ENCODE measurements at regions of chr4 and their contacts with region 1.

Region 1: DNA sequence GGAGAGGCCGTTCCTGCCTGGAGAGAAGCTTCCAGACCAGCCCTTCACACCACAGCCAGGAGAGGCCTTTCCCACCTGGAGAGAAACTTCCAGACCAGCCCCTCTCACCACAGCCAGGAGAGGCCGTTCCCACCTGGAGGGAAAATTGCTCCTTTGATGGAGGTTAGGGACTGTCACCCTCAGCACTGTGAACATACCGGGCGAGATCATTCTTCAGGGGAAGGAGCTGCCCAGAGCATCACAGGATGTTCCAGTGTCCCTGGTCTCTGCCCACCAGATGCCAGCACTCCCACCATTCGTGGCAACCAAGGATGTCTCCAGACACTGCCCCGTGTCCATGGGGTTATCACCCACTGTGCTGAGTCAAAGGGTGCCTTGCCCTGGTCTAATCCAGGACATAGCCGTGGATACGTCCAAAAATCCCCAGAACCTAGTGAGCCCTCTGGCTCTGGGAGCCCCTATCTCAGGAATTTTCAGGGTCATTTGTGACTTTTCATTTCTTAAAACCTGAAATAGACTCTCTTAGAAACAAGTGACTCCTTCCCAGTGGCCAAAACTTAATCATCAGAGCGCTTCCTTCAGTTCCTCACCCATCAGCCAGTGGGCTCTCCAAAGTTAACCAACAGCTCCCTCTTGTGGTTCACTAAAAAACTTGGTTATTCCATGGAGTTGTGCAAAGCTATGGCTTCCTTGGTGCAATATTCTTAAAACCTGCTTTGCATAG is 80.2 kb downstream of the CRMP1 start:
- DNase-seq: peak; percentile 18 to 48
- H3K4me3 ChIP-seq: no peak overlapping the region
- H3K27ac ChIP-seq: no peak overlapping the region
- H3K4me1 ChIP-seq: no peaks in the 10 kb centered on the region
- H3K27me3 ChIP-seq: no peaks in the 10 kb centered on the region
- CTCF ChIP-seq: peak; percentile 76

Region 2: DNA sequence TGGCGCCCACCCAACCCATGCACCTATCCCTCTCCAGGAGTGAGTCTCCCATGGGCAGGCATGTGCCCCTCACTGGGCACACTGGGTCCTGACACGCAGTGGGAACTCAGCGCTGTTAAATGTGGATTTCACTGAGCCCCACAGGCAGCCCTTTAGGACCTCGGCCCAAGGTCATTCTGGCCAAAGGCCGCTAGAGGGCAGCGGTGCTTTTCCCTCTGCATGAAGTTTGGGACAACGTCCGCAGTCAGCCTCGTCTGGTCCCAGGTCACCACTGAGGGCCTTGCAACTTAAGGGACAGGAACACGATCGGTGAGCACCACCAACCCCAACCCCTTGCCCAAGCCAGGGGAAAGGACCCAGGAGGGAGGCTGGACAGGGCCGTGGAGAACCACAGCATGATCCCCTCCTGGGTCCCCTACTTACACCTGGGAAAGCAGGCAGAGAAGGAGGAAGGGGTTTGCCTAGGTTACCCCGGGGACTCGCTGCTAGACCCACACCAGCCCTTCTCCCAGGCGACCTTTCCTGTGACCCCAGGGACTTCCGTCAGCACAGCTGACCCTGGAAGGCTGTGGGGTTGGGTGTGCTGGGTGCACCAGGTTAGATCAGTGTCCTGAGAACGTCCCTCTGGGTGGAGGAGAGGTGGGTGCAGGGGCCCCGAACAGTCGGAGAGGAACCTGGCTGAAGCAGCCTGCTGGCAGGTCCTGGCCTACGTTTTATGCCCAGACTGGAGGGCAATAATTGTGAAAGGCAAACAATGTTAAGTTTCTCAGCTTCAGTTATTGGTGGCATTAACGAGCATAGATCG is 817.4 kb before region 1 on chr4:
- CTCF ChIA-PET with region 1: interaction called, 3 read pairs
- POLR2A ChIA-PET with region 1: no interaction called
- intact Hi-C with region 1: loop called (anchors 1 kb)
- DNase-seq: peak in 1 of 2 experiments; percentile 40
- H3K4me3 ChIP-seq: no peak overlapping the region
- H3K27ac ChIP-seq: no peak overlapping the region
- H3K4me1 ChIP-seq: peaks cover 8% of the 10 kb centered on the region
- H3K27me3 ChIP-seq: peaks cover 3% of the 10 kb centered on the region; the same call in 1 of the 2 replicates
- CTCF ChIP-seq: peak; percentile 81

Region 3: DNA sequence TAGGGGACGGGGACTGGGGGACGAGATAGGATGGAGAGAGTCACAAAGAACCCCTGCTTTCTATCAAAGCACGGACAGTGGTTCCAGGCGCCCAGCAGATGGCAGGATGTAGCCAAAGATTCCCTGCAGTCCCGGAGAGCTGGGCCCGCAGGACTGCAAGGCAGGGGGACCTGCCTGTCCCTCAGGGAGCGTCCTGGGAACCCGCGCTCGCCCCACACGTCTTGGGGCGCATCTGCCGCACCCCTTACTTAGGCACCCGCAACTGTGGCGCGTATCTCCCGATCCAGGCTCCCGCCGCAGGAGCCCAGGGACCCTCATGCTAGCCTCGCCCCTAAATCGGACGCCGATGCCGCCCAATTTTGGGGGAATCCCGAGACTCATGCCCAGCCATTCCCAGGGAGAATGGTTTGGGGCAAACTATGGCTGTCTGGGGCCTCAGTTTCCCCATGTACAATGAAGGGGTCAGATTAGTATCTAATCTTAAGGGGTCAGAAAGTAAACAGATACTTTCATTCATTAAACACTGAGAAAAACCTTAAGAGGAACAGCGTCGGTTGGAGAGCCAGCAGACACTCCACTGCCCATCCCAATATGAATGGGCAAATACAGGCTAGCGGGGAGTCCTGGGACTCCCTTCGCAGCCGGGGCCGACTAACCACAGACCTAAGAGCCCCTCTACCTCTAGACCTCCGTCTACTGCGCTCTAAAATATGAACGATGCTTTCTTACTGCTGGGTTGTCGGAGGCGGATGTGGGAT is 762.0 kb before region 1 on chr4:
- CTCF ChIA-PET with region 1: no interaction called
- POLR2A ChIA-PET with region 1: no interaction called
- intact Hi-C with region 1: loop called (anchors 5 kb)
- DNase-seq: peak in 1 of 2 experiments; percentile 22
- H3K4me3 ChIP-seq: no peak overlapping the region
- H3K27ac ChIP-seq: no peak overlapping the region
- H3K4me1 ChIP-seq: no peaks in the 10 kb centered on the region
- H3K27me3 ChIP-seq: peaks cover 23% of the 10 kb centered on the region
- CTCF ChIP-seq: peak; percentile 60

Region 4: DNA sequence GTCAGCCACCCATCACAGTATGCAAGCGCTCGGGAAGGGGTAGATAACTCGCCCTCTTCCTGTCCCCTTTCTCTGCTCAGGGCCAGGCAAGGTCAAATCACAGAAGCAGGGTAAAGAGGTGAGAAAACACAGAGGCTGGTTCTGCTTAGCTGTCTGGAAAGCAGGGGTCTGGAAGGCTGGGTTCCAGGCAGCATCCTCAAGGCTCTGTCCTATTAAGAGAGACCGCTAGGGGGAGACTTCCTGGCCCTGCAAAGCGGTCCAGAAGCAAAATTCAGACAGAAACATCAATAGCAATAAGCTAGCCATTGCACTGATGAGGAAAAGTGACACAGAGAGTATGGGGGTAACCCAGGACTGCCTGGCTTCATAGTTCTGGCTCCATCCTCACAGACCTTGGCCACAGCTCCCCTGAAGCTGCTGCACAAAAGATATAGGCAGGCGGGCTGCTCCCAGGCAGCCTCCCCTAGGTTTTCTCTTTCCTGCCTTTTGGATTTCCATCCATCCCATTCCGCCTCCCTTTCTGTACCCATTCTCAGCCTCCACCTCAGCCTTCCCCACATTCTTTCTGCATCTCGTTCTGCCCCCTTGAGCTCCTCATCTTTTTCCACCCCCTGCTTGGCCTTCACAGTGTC is 412.8 kb before region 1 on chr4:
- CTCF ChIA-PET with region 1: no interaction called
- POLR2A ChIA-PET with region 1: no interaction called
- intact Hi-C with region 1: loop called (anchors 5 kb)
- DNase-seq: peak in 1 of 2 experiments; percentile 5
- H3K4me3 ChIP-seq: no peak overlapping the region
- H3K27ac ChIP-seq: no peak overlapping the region
- H3K4me1 ChIP-seq: no peaks in the 10 kb centered on the region
- H3K27me3 ChIP-seq: peaks cover 27% of the 10 kb centered on the region
- CTCF ChIP-seq: peak; percentile 76

Region 5: GRCh38 chr4:5998333-5998936 is 185.8 kb after region 1 on chr4:
- CTCF ChIA-PET with region 1: interaction called, 10 read pairs
- POLR2A ChIA-PET with region 1: no interaction called
- intact Hi-C with region 1: no loop called
- DNase-seq: peak in 1 of 2 experiments; percentile 58
- H3K4me3 ChIP-seq: no peak overlapping the region
- H3K27ac ChIP-seq: no peak overlapping the region
- H3K4me1 ChIP-seq: no peaks in the 10 kb centered on the region
- H3K27me3 ChIP-seq: peaks cover 36% of the 10 kb centered on the region
- CTCF ChIP-seq: peak; percentile 87